ENCODE measurements at regions of chr4 and their contacts with region 1.

Region 1: DNA sequence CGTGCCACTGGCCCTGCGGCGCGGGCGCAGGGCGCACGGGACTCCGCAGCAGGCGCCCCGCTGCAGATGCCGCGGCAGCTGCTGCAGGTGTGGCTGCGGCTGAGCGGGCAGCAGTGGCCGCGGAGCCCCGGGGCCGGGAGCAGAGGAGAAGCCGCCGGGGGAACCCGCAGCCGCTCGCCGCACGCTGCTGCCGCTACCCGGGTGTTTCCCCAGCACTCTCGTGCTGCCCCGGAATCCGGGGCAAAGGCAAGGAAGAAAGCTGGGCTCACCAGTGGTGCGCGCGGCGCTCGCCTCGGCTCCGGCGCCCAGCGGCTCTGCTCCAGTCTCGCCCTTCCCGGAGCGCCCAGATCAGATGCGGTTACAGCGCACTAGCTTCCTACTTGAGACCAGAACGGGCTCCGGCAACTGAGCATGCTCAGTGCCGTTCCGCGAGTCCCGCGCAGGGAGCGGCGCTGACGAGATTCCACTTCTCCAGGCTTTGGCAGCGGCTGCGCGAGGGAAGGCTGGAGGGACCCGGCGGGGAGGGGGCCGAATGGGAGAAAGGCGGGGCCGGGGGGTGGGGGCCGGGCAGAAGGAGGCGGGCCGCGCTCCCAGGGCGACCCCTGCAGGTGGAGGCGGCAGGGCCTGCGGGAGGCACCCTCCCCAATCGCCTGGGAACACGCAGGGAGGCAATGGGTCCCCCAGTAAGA is at the start of gene APBB2:
- DNase-seq: peak; percentile 87
- H3K4me3 ChIP-seq: peak within 1 kb of the TSS; percentile 56 to 92 (median 72)
- H3K27ac ChIP-seq: peak within 1 kb of the TSS; percentile 68 to 91 (median 81)
- H3K4me1 ChIP-seq: peaks cover 7 to 59% (median 36%) of the 10 kb centered on the region in 6 donors
- H3K27me3 ChIP-seq: peaks cover 0 to 83% (median 33%) of the 10 kb centered on the region in 7 donors
- CTCF ChIP-seq: peak in 9 of 11 experiments; percentile 36 to 84 (median 74)
- POLR2A ChIP-seq: peak in 2 of 3 donors; percentile 16 to 23
- total RNA-seq, gene APBB2: 49.2 to 115 (median 82.7) TPM

Region 2: GRCh38 chr4:40933272-40934053 is 280.8 kb before region 1 on chr4:
- intact Hi-C with region 1: loop called (anchors 5 kb)
- DNase-seq: no peak
- H3K4me3 ChIP-seq: no peak overlapping the region
- H3K27ac ChIP-seq: no peak overlapping the region
- H3K4me1 ChIP-seq: no peaks in the 10 kb centered on the region
- H3K27me3 ChIP-seq: no peaks in the 10 kb centered on the region
- CTCF ChIP-seq: no peak
- POLR2A ChIP-seq: no peak

Region 3: DNA sequence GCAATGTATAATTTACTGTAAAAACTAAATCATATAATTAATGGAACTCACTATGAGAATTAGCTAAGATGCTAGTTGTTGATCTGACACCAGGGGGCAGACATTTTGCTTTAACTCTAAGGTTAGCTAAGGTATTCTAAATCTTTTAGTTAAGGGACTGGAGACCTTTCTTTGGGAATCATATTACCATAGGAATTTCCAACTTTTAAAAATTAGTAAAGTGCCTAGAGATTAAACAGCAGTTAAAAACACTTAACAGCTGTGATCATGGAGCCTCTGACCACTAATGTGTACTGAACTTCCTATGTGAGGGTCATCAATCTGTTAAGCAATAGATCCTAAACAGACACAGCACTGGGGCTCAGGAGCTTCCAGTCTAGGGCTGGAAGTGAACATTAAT is 237.9 kb before region 1 on chr4:
- intact Hi-C with region 1: loop called (anchors 10 kb)
- DNase-seq: no peak
- H3K4me3 ChIP-seq: no peak overlapping the region
- H3K27ac ChIP-seq: no peak overlapping the region
- H3K4me1 ChIP-seq: peaks cover 0 to 4% (median 0%) of the 10 kb centered on the region in 6 donors
- H3K27me3 ChIP-seq: no peaks in the 10 kb centered on the region
- CTCF ChIP-seq: peak; percentile 21 to 67 (median 52)
- POLR2A ChIP-seq: no peak